ENCODE measurements at regions of chr19 and their contacts with region 1.

Region 1: GRCh38 chr19:52734893-52735661 is at the start of gene ZNF611:
- DNase-seq: peak; percentile 98 to 99 (median 98)
- H3K4me3 ChIP-seq: peak within 1 kb of the TSS; percentile 94 to 98
- H3K4me3 Mint-ChIP-seq: peak within 1 kb of the TSS; percentile 90 to 97 (median 94)
- H3K27ac ChIP-seq: peak within 1 kb of the TSS; percentile 80
- H3K27ac Mint-ChIP-seq: peak within 1 kb of the TSS; percentile 94 to 98 (median 97)
- H3K4me1 ChIP-seq: peaks cover 22% of the 10 kb centered on the region
- H3K4me1 Mint-ChIP-seq: peaks cover 17 to 34% (median 25%) of the 10 kb centered on the region in 4 donors
- H3K27me3 ChIP-seq: no peaks in the 10 kb centered on the region
- H3K27me3 Mint-ChIP-seq: no peaks in the 10 kb centered on the region
- total RNA-seq, gene ZNF611: 52.8 to 53.7 TPM

Region 2: DNA sequence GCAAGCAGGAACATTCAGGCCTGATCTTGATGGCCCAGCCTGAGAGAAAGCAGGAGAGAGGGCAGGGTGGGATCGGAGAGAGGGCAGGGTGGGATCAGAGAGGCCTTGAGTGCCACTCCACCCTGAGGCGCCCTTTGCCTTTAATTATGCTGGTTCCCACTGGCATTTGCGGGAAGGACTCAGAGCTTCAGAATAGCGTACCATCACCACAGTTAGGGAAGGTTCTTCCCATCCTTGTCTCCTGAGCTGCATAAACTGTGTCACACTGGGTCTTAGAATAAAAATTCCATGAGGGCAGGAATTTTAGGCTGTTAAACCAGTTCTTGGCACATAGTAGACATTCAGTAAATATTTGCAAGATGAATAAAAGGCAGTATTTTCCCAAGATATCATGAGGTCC is 520.9 kb before region 1 on chr19:
- CTCF ChIA-PET with region 1: no interaction called
- POLR2A ChIA-PET with region 1: no interaction called
- intact Hi-C with region 1: no loop called
- DNase-seq: no peak
- H3K4me3 ChIP-seq: no peak overlapping the region
- H3K4me3 Mint-ChIP-seq: no peak overlapping the region
- H3K27ac ChIP-seq: no peak overlapping the region
- H3K27ac Mint-ChIP-seq: no peak overlapping the region
- H3K4me1 ChIP-seq: no peaks in the 10 kb centered on the region
- H3K4me1 Mint-ChIP-seq: peaks cover 0 to 10% (median 6%) of the 10 kb centered on the region in 4 donors
- H3K27me3 ChIP-seq: no peaks in the 10 kb centered on the region
- H3K27me3 Mint-ChIP-seq: no peaks in the 10 kb centered on the region

Region 3: GRCh38 chr19:52507266-52507665 is 227.8 kb before region 1 on chr19:
- CTCF ChIA-PET with region 1: no interaction called
- POLR2A ChIA-PET with region 1: no interaction called
- intact Hi-C with region 1: no loop called
- DNase-seq: no peak
- H3K4me3 ChIP-seq: no peak overlapping the region
- H3K4me3 Mint-ChIP-seq: no peak overlapping the region
- H3K27ac ChIP-seq: no peak overlapping the region
- H3K27ac Mint-ChIP-seq: no peak overlapping the region
- H3K4me1 ChIP-seq: no peaks in the 10 kb centered on the region
- H3K4me1 Mint-ChIP-seq: no peaks in the 10 kb centered on the region
- H3K27me3 ChIP-seq: no peaks in the 10 kb centered on the region
- H3K27me3 Mint-ChIP-seq: no peaks in the 10 kb centered on the region

Region 4: DNA sequence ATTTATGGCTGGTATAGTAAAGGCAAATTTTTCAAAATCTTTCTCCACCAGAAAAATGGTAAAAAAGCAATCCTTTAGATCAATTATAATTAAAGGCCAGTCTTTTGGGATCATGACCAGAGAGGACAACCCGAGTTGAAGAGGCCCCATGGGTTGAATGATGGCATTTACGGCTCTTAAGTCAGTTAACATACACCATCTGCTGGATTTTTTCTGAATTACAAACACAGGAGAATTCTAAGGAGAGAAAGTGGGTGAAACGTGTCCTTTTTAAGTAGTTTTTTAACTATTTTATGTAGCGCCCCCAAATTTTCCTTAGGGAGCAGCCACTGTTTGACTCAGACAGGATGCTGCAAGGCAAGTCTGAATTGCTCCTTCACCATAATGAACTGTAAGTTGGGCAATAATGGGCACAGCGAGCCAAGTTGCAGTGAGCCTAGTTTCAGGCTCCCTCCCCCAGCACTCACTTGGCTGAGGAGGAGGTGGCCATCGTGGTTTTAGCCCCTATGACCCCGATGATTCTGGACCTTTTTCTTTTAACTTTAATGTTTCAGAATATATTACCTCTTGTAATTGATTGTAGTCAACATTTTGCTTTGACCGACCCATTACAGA is 13.4 kb after region 1 on chr19:
- CTCF ChIA-PET with region 1: interaction called, 3 read pairs
- POLR2A ChIA-PET with region 1: no interaction called
- intact Hi-C with region 1: loop called (anchors 1 kb)
- DNase-seq: peak in 4 of 5 donors; percentile 30 to 41 (median 35)
- H3K4me3 ChIP-seq: no peak overlapping the region
- H3K4me3 Mint-ChIP-seq: no peak overlapping the region
- H3K27ac ChIP-seq: no peak overlapping the region
- H3K27ac Mint-ChIP-seq: no peak overlapping the region
- H3K4me1 ChIP-seq: no peaks in the 10 kb centered on the region
- H3K4me1 Mint-ChIP-seq: peaks cover 2 to 20% (median 7%) of the 10 kb centered on the region in 4 donors
- H3K27me3 ChIP-seq: no peaks in the 10 kb centered on the region
- H3K27me3 Mint-ChIP-seq: no peaks in the 10 kb centered on the region